CD4-positive, alpha-beta T cell (primary cell): ENCODE measurements at regions of chr9 and their contacts with region 1.

Region 1: GRCh38 chr9:5557606-5558587 is 47.6 kb downstream of the PDCD1LG2 start:
- DNase-seq: peak; percentile 28 to 86 (median 46)
- ATAC-seq: peak; percentile 97
- H3K4me3 ChIP-seq: no peak overlapping the region
- H3K4me3 Mint-ChIP-seq: peak overlapping the region; percentile 76
- H3K27ac ChIP-seq: peak overlapping the region; percentile 67 to 81
- H3K27ac Mint-ChIP-seq: peak overlapping the region; percentile 94
- H3K4me1 ChIP-seq: peaks cover 43% of the 10 kb centered on the region
- H3K4me1 Mint-ChIP-seq: peaks cover 66% of the 10 kb centered on the region
- H3K27me3 ChIP-seq: no peaks in the 10 kb centered on the region
- H3K27me3 Mint-ChIP-seq: no peaks in the 10 kb centered on the region
- CTCF ChIP-seq: no peak

Region 2: GRCh38 chr9:4464911-4465513 is 1092.9 kb before region 1 on chr9:
- CTCF ChIA-PET with region 1: no interaction called
- POLR2A ChIA-PET with region 1: no interaction called
- intact Hi-C with region 1: no loop called
- DNase-seq: no peak
- ATAC-seq: no peak
- H3K4me3 ChIP-seq: no peak overlapping the region
- H3K4me3 Mint-ChIP-seq: no peak overlapping the region
- H3K27ac ChIP-seq: no peak overlapping the region
- H3K27ac Mint-ChIP-seq: no peak overlapping the region
- H3K4me1 ChIP-seq: peaks cover 2% of the 10 kb centered on the region
- H3K4me1 Mint-ChIP-seq: peaks cover 4% of the 10 kb centered on the region
- H3K27me3 ChIP-seq: peaks cover 0 to 2% of the 10 kb centered on the region in 2 experiments
- H3K27me3 Mint-ChIP-seq: no peaks in the 10 kb centered on the region
- CTCF ChIP-seq: no peak

Region 3: GRCh38 chr9:5450359-5451091 is 107.4 kb before region 1 on chr9 and contains the start of gene CD274:
- CTCF ChIA-PET with region 1: interaction called, 4 read pairs
- POLR2A ChIA-PET with region 1: interaction called, 32 read pairs
- intact Hi-C with region 1: no loop called
- DNase-seq: peak; percentile 57 to 92 (median 70)
- ATAC-seq: peak; percentile 94
- H3K4me3 ChIP-seq: peak within 1 kb of the TSS; percentile 69
- H3K4me3 Mint-ChIP-seq: peak within 1 kb of the TSS; percentile 88
- H3K27ac ChIP-seq: peak within 1 kb of the TSS; percentile 77 to 87
- H3K27ac Mint-ChIP-seq: peak within 1 kb of the TSS; percentile 95
- H3K4me1 ChIP-seq: peaks cover 34% of the 10 kb centered on the region
- H3K4me1 Mint-ChIP-seq: peaks cover 74% of the 10 kb centered on the region
- H3K27me3 ChIP-seq: no peaks in the 10 kb centered on the region
- H3K27me3 Mint-ChIP-seq: no peaks in the 10 kb centered on the region
- CTCF ChIP-seq: peak; percentile 76
- total RNA-seq, gene CD274: 5.3 to 6.3 TPM

Region 4: DNA sequence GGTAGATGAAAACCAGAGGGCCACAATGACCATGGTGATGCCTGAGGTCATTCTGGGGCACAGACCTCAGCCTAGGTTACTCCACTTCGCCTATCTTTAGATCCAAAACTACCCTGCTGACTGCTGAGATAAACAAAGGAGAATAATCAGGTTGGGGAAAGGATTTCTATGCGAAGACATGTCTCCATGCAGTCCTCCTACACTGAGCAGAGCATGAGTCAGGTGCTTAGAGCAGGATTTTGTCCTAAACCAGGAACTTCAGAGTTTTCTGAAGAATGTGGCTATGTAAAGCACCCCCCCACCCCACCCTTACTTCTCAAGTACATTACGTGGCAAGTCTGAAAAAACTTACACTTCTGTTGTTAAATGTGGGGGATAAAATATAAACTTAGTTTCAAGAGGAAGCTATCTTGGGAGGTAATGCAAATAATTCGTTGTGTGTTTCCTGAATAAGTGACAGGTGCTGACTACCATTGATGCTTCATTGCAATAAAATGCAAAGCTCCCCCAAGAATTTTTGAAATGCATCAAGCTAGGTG is 28.1 kb before region 1 on chr9:
- CTCF ChIA-PET with region 1: interaction called, 5 read pairs
- POLR2A ChIA-PET with region 1: interaction called, 15 read pairs
- intact Hi-C with region 1: no loop called
- DNase-seq: no peak
- ATAC-seq: no peak
- H3K4me3 ChIP-seq: no peak overlapping the region
- H3K4me3 Mint-ChIP-seq: no peak overlapping the region
- H3K27ac ChIP-seq: no peak overlapping the region
- H3K27ac Mint-ChIP-seq: peak overlapping the region; percentile 63
- H3K4me1 ChIP-seq: peaks cover 23% of the 10 kb centered on the region
- H3K4me1 Mint-ChIP-seq: peaks cover 50% of the 10 kb centered on the region
- H3K27me3 ChIP-seq: no peaks in the 10 kb centered on the region
- H3K27me3 Mint-ChIP-seq: no peaks in the 10 kb centered on the region
- CTCF ChIP-seq: no peak

Region 5: DNA sequence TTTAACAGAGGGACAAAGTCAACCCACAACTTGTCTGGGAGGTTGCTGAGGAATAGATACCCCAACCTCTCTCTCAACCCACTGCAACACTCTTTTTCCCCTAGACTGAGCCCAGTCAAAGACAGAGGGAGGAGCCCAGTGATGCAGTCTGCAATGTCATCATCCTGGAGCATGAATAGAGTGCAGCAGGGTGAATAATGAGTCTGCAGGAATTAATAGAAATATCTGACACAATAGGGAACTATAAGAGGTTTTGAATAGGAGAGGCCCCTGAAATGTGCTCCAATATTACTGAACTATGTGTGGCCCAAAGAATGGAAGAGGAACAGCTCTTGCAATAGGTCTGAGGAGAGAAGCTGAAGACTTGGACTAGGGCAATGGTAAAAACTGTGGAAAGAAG is 11.5 kb after region 1 on chr9:
- CTCF ChIA-PET with region 1: interaction called, 5 read pairs
- POLR2A ChIA-PET with region 1: interaction called, 35 read pairs
- intact Hi-C with region 1: no loop called
- DNase-seq: peak in 1 of 14 experiments; percentile 20
- ATAC-seq: no peak
- H3K4me3 ChIP-seq: no peak overlapping the region
- H3K4me3 Mint-ChIP-seq: no peak overlapping the region
- H3K27ac ChIP-seq: no peak overlapping the region
- H3K27ac Mint-ChIP-seq: no peak overlapping the region
- H3K4me1 ChIP-seq: peaks cover 17% of the 10 kb centered on the region
- H3K4me1 Mint-ChIP-seq: peaks cover 30% of the 10 kb centered on the region
- H3K27me3 ChIP-seq: no peaks in the 10 kb centered on the region
- H3K27me3 Mint-ChIP-seq: no peaks in the 10 kb centered on the region
- CTCF ChIP-seq: no peak

Region 6: GRCh38 chr9:5582835-5583195 is 24.9 kb after region 1 on chr9:
- CTCF ChIA-PET with region 1: no interaction called
- POLR2A ChIA-PET with region 1: interaction called, 31 read pairs
- intact Hi-C with region 1: no loop called
- DNase-seq: peak in 12 of 14 experiments; percentile 10 to 81 (median 30)
- ATAC-seq: peak; percentile 92
- H3K4me3 ChIP-seq: no peak overlapping the region
- H3K4me3 Mint-ChIP-seq: peak overlapping the region; percentile 1
- H3K27ac ChIP-seq: peak overlapping the region in 1 of 2 donors; percentile 16
- H3K27ac Mint-ChIP-seq: peak overlapping the region; percentile 81
- H3K4me1 ChIP-seq: peaks cover 32% of the 10 kb centered on the region
- H3K4me1 Mint-ChIP-seq: peaks cover 70% of the 10 kb centered on the region
- H3K27me3 ChIP-seq: no peaks in the 10 kb centered on the region
- H3K27me3 Mint-ChIP-seq: no peaks in the 10 kb centered on the region
- CTCF ChIP-seq: no peak

Region 7: DNA sequence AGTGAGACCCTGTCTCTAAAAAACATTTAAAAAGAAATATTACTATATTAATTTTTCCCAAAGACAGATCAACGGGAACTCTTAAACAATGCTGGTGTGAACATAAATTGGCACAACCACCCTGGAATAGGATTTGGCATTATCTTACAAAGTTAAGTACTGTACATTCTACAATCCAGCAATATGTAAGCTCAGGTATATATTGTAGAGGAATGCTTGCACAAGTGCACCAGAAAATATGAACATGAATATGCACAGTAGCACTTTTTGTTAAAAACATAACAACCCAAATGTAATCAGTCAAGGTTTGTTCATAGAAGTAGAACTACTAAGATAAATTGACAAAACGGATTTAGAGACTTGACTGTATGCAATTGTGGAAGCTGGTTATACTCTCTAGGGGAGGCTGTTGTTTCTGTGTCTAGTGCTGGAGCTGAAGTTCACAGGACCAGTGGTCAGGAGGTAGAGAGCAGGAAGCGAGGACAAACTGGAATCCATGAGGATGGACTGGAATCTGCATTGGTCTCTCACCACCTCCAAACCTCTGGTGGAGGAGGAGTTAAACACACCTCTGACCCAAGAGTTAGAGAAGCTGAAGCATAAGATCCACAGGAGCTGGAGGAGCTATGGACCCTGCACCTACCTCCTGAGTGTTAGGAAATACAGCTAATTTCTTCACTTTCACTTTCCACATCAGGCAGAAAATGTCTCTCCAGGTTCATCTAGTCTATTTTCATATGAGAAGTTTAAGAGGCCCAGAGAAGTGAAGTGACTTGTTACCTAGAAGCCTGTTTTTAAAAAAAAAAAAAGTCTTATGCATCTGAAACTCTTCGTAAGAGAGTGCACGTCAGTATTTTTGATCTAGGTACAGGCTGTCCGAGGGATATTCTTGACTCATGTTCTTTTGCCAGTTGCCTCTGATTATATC is 50.7 kb after region 1 on chr9:
- CTCF ChIA-PET with region 1: no interaction called
- POLR2A ChIA-PET with region 1: no interaction called
- intact Hi-C with region 1: no loop called
- DNase-seq: peak in 3 of 14 experiments; percentile 17 to 26 (median 18)
- ATAC-seq: peak; percentile 62
- H3K4me3 ChIP-seq: peak overlapping the region; percentile 42
- H3K4me3 Mint-ChIP-seq: peak overlapping the region; percentile 83
- H3K27ac ChIP-seq: no peak overlapping the region
- H3K27ac Mint-ChIP-seq: peak overlapping the region; percentile 71
- H3K4me1 ChIP-seq: peaks cover 4% of the 10 kb centered on the region
- H3K4me1 Mint-ChIP-seq: peaks cover 39% of the 10 kb centered on the region
- H3K27me3 ChIP-seq: no peaks in the 10 kb centered on the region
- H3K27me3 Mint-ChIP-seq: no peaks in the 10 kb centered on the region
- CTCF ChIP-seq: no peak